H1 (cell line): ENCODE measurements at regions of chr3 and their contacts with region 1.

Region 1: DNA sequence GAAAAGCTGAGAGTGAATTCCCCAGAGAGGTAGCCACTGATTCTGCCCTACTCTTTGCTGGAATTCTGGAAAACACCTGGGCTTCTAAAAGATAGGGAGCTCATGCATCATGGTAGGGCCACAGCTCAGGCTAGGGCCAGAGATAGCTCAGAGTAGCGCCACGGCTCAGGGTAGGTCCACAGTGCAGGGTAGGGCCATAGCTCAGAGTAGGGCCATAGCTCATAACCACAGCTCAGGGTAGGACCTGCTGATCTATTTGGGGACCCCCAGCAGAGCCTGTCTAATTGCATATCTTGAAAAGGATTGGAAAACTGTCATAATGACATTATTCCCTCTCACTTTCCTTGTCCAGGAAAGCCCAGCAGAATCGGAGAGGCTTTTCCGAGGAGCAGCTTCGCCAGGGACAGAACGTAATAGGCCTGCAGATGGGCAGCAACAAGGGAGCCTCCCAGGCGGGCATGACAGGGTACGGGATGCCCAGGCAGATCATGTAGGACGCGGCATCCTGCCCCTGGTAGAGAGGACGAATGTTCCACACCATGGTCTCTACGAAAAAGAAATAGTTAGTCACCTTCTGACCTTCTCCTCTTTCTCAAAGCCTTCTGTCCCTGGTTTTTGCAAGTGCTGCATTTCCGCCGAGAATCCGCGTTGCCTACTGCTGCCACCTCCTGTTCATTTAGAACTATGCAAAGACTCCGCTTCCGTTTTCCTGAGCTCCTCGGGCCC is 14.5 kb downstream of the TAGLN3 start:
- DNase-seq: peak; percentile 59 to 67
- H3K4me3 ChIP-seq: no peak overlapping the region
- H3K27ac ChIP-seq: no peak overlapping the region
- H3K4me1 ChIP-seq: no peaks in the 10 kb centered on the region
- H3K27me3 ChIP-seq: no peaks in the 10 kb centered on the region
- CTCF ChIP-seq: peak; percentile 66 to 84 (median 73)
- EP300 ChIP-seq: no peak
- POLR2A ChIP-seq: no peak
- RAD21 ChIP-seq: peak; percentile 86 to 87

Region 2: DNA sequence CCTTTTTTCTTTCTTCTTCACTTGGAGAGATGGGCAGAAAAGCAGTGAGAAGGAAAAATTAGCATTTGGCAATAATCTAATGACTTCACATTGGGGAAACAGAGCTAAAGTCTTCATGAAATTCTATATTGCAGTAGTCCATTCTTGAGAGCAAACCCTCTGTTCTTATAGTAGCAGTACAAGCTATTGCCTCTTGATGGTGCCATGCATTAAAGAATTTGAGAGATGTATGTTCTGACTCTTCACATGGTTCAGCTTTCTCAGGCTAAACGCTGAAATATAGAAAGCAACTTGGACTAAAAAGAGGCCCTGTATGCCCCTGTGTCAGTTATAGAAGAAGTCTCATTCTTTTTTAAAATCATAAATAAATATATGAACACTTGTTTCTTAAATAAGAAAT is 118.1 kb before region 1 on chr3:
- CTCF ChIA-PET with region 1: interaction called, 27 read pairs
- POLR2A ChIA-PET with region 1: no interaction called
- DNase-seq: no peak
- H3K4me3 ChIP-seq: no peak overlapping the region
- H3K27ac ChIP-seq: no peak overlapping the region
- H3K4me1 ChIP-seq: no peaks in the 10 kb centered on the region
- H3K27me3 ChIP-seq: no peaks in the 10 kb centered on the region
- CTCF ChIP-seq: peak in 2 of 3 experiments; percentile 55; a peak in 2 of 4 replicates
- EP300 ChIP-seq: no peak
- POLR2A ChIP-seq: no peak
- RAD21 ChIP-seq: peak; percentile 76 to 80

Region 3: DNA sequence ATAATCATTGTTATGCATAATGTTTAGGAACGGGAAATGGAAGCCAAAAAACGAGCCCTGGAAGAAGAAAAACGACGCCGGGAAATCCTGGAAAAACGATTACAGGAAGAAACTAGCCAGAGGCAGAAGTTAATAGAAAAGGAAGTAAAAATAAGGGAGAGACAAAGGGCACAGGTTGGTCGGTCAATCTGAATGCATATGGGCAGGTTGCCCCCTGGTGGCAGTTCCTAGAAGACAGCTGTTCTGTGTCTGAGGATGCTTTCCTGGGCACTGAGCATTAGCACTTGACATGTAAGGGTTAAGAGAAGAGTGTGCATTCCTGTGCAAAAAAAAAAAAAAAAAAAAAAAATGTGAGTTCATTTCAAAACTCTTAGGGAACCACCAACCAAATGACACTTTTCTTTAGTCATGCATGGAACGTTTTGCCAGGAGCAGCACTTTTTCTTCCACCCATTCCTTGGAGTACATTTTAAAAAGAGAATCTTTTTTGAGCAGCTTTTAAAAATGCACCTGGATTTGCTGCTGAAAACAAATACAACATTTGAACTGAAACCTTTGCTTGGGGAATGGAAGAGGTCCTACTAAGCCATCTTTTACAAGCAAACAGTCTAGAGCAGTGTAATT is 45.5 kb before region 1 on chr3:
- CTCF ChIA-PET with region 1: interaction called, 33 read pairs
- POLR2A ChIA-PET with region 1: no interaction called
- DNase-seq: peak; percentile 58 to 93
- H3K4me3 ChIP-seq: no peak overlapping the region
- H3K27ac ChIP-seq: no peak overlapping the region
- H3K4me1 ChIP-seq: no peaks in the 10 kb centered on the region
- H3K27me3 ChIP-seq: no peaks in the 10 kb centered on the region
- CTCF ChIP-seq: peak; percentile 70 to 91 (median 88)
- EP300 ChIP-seq: no peak
- POLR2A ChIP-seq: no peak
- RAD21 ChIP-seq: peak; percentile 95 to 98

Region 4: DNA sequence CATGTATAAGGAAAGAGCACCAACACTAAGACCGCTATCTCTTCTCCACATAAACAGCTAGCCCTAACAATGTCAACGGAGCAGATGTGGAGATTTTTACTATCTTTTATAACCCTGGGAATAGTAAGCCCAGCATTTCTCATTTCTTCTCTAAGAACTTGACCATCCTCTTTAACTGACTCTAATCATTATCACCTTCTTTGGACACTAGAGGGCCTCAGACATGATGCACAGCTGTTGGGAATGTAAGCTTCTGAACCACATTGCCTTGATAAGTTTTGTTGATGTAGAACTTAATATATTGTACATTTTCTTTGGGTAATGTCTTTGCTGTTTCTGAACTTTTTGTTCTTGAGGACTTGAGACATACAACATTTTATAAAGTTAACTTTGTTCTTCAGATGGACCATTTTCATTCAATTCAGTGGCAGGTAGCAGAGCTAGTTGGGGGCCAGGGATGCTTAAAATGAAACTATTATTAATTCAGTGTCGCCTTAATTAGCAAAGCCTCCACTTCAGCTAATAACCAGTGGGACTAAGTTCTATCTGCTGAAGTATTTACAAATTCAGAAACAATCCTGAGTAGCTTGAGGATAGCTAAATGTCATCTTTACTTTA is 24.1 kb before region 1 on chr3:
- CTCF ChIA-PET with region 1: interaction called, 384 read pairs
- POLR2A ChIA-PET with region 1: no interaction called
- DNase-seq: no peak
- H3K4me3 ChIP-seq: no peak overlapping the region
- H3K27ac ChIP-seq: no peak overlapping the region
- H3K4me1 ChIP-seq: no peaks in the 10 kb centered on the region
- H3K27me3 ChIP-seq: no peaks in the 10 kb centered on the region
- CTCF ChIP-seq: peak in 2 of 3 experiments; percentile 64 to 75; a peak in 3 of 4 replicates
- EP300 ChIP-seq: no peak
- POLR2A ChIP-seq: no peak
- RAD21 ChIP-seq: peak; percentile 61 to 64

Region 5: GRCh38 chr3:112032098-112032731 is 19.0 kb after region 1 on chr3:
- CTCF ChIA-PET with region 1: interaction called, 13 read pairs
- POLR2A ChIA-PET with region 1: no interaction called
- DNase-seq: no peak
- H3K4me3 ChIP-seq: no peak overlapping the region
- H3K27ac ChIP-seq: no peak overlapping the region
- H3K4me1 ChIP-seq: no peaks in the 10 kb centered on the region
- H3K27me3 ChIP-seq: no peaks in the 10 kb centered on the region
- CTCF ChIP-seq: no peak
- EP300 ChIP-seq: no peak
- POLR2A ChIP-seq: no peak
- RAD21 ChIP-seq: no peak